GM12878 (cell line): ENCODE measurements at regions of chr1 and their contacts with region 1.

Region 1: DNA sequence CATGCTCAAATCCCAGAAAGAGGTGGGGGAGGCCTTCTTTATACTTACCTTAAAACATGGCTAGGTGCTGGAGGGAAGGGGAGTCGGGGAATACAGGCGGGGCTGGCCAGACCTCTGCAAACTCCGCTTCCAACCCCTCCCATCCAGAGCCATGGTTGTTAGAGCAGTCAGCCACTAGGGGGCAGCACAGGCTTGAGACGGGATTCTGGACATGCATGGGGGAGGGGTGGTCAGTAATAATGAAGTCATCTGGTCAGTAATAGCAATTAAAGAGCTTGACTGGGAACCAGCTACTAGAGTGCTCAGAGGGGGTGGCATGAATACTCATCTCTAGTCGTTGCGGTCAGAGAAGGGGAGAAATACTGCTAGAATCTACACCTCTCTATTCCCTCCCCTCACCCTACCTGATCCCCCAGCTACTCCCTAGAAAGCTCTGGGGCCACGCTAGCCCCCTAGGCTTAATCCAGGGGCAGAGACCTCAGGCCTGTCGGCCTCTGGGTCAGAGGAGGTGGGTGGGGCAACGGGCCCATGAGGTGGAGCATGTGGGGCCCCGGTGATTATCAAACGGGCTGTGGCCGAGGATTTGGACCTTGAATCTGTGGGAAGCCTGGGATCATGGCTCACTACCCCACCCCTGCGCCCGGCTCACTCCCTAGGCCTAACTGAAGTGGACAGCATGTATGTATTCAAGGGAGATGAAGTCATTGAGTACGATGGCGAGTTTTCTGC is 2.9 kb downstream of the CASQ1 start:
- DNase-seq: peak; percentile 48
- ATAC-seq: peak; percentile 86
- H3K4me3 ChIP-seq: no peak overlapping the region
- H3K27ac ChIP-seq: no peak overlapping the region
- H3K4me1 ChIP-seq: peaks cover 21% of the 10 kb centered on the region
- H3K27me3 ChIP-seq: peaks cover 0 to 3% of the 10 kb centered on the region in 2 experiments; a peak in 1 of 4 replicates
- CTCF ChIP-seq: peak; percentile 95 to 99 (median 97); a peak in 5 of 6 replicates
- EP300 ChIP-seq: no peak
- POLR2A ChIP-seq: no peak
- RAD21 ChIP-seq: peak; percentile 100

Region 2: DNA sequence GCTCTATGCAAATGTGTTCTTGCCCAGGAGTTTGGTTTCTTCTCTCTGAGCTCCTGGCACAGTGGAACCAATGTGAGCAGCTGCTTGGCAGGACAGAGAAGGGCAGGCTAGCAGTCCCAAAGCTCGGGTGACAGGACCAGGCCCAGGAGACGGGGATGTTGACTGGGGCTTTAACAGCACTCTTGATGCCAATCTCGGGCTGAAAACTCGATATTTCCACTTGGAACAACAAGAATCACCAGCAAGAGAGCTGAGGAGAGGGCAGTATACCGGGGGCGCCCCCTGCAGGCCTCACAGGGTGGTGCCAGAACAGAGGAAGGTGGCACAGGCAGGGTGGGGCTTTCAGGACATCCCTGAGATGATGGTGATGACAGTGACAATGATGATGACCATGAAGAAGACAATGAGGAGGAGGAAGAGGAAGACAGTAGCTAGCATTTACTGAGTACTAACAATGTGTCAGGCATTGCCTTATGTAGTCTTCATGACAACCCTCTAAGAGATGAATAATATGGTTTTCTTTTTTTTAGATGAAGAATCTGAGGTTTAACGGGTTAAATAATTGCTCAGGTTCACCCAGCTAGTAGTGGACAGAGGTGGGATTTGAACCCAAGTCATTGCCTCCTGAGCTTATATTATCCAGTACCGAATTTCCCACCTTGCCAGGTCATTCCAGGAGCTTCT is 114.6 kb before region 1 on chr1:
- CTCF ChIA-PET with region 1: interaction called, 13 read pairs
- POLR2A ChIA-PET with region 1: no interaction called
- RAD21 ChIA-PET with region 1: no interaction called
- SMC1A ChIA-PET with region 1: no interaction called
- in situ Hi-C with region 1: no loop called
- intact Hi-C with region 1: no loop called
- DNase-seq: no peak
- ATAC-seq: peak; percentile 96
- H3K4me3 ChIP-seq: no peak overlapping the region
- H3K27ac ChIP-seq: no peak overlapping the region
- H3K4me1 ChIP-seq: no peaks in the 10 kb centered on the region; the same call in 1 of the 2 replicates
- H3K27me3 ChIP-seq: peaks cover 0 to 2% of the 10 kb centered on the region in 2 experiments; a peak in 3 of 4 replicates
- CTCF ChIP-seq: peak; percentile 78 to 97 (median 92)
- EP300 ChIP-seq: no peak
- POLR2A ChIP-seq: no peak
- RAD21 ChIP-seq: peak; percentile 78

Region 3: GRCh38 chr1:160169553-160170399 is 23.5 kb before region 1 on chr1:
- CTCF ChIA-PET with region 1: interaction called, 17 read pairs
- POLR2A ChIA-PET with region 1: interaction called, 3 read pairs
- RAD21 ChIA-PET with region 1: interaction called, 12 read pairs
- SMC1A ChIA-PET with region 1: interaction called, 10 read pairs
- in situ Hi-C with region 1: no loop called
- intact Hi-C with region 1: no loop called
- DNase-seq: peak; percentile 71
- ATAC-seq: peak; percentile 86
- H3K4me3 ChIP-seq: no peak overlapping the region
- H3K27ac ChIP-seq: no peak overlapping the region
- H3K4me1 ChIP-seq: peaks cover 21% of the 10 kb centered on the region
- H3K27me3 ChIP-seq: no peaks in the 10 kb centered on the region; a peak in 2 of 4 replicates
- CTCF ChIP-seq: no peak
- EP300 ChIP-seq: peak in 1 of 2 experiments; percentile 57; a peak in 2 of 4 replicates
- POLR2A ChIP-seq: no peak
- RAD21 ChIP-seq: no peak

Region 4: GRCh38 chr1:160219062-160219929 is 26.0 kb after region 1 on chr1:
- CTCF ChIA-PET with region 1: interaction called, 82 read pairs
- POLR2A ChIA-PET with region 1: no interaction called
- RAD21 ChIA-PET with region 1: interaction called, 35 read pairs
- SMC1A ChIA-PET with region 1: interaction called, 51 read pairs
- in situ Hi-C with region 1: no loop called
- intact Hi-C with region 1: loop called (anchors 1 kb)
- DNase-seq: no peak
- ATAC-seq: peak; percentile 44
- H3K4me3 ChIP-seq: no peak overlapping the region
- H3K27ac ChIP-seq: no peak overlapping the region
- H3K4me1 ChIP-seq: no peaks in the 10 kb centered on the region
- H3K27me3 ChIP-seq: no peaks in the 10 kb centered on the region
- CTCF ChIP-seq: peak; percentile 21 to 34 (median 34); a peak in 3 of 6 replicates
- EP300 ChIP-seq: no peak
- POLR2A ChIP-seq: no peak
- RAD21 ChIP-seq: peak; percentile 43

Region 5: DNA sequence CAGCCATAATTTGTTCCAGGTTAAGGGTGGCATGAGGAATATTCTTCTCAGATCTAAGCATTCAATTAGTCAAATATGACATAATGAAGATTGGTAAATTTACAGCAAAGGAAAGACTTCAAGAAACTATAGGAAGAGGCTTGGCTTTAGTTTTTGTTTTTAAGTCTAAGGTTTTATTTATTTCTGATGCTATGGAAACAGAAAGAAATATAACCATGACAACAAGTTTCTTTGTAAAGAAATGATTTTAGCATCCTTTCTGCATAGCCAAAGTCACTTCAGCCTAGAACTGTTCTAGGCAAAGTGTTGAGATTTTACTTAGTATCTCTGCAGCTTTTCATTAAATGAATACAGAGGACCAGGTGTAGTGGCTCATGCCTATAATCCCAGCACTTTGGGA is 39.7 kb after region 1 on chr1:
- CTCF ChIA-PET with region 1: interaction called, 24 read pairs
- POLR2A ChIA-PET with region 1: no interaction called
- RAD21 ChIA-PET with region 1: interaction called, 8 read pairs
- SMC1A ChIA-PET with region 1: interaction called, 19 read pairs
- in situ Hi-C with region 1: no loop called
- intact Hi-C with region 1: no loop called
- DNase-seq: no peak
- ATAC-seq: no peak
- H3K4me3 ChIP-seq: no peak overlapping the region
- H3K27ac ChIP-seq: no peak overlapping the region
- H3K4me1 ChIP-seq: peaks cover 4% of the 10 kb centered on the region; the same call in 1 of the 2 replicates
- H3K27me3 ChIP-seq: no peaks in the 10 kb centered on the region
- CTCF ChIP-seq: no peak
- EP300 ChIP-seq: no peak
- POLR2A ChIP-seq: no peak
- RAD21 ChIP-seq: no peak

Region 6: GRCh38 chr1:160244209-160244608 is 51.0 kb after region 1 on chr1:
- CTCF ChIA-PET with region 1: interaction called, 273 read pairs
- POLR2A ChIA-PET with region 1: interaction called, 4 read pairs
- RAD21 ChIA-PET with region 1: interaction called, 12 read pairs
- SMC1A ChIA-PET with region 1: interaction called, 19 read pairs
- in situ Hi-C with region 1: no loop called
- intact Hi-C with region 1: no loop called
- DNase-seq: no peak
- ATAC-seq: no peak
- H3K4me3 ChIP-seq: no peak overlapping the region
- H3K27ac ChIP-seq: no peak overlapping the region
- H3K4me1 ChIP-seq: no peaks in the 10 kb centered on the region
- H3K27me3 ChIP-seq: no peaks in the 10 kb centered on the region
- CTCF ChIP-seq: no peak
- EP300 ChIP-seq: no peak
- POLR2A ChIP-seq: no peak
- RAD21 ChIP-seq: no peak

Region 7: GRCh38 chr1:160284782-160285344 is 91.6 kb after region 1 on chr1 and contains the start of gene PEX19:
- CTCF ChIA-PET with region 1: interaction called, 231 read pairs
- POLR2A ChIA-PET with region 1: no interaction called
- RAD21 ChIA-PET with region 1: interaction called, 105 read pairs
- SMC1A ChIA-PET with region 1: interaction called, 13 read pairs
- in situ Hi-C with region 1: loop called (anchors 5 kb)
- intact Hi-C with region 1: no loop called
- DNase-seq: peak; percentile 71
- ATAC-seq: peak; percentile 100
- H3K4me3 ChIP-seq: peak within 1 kb of the TSS; percentile 91
- H3K27ac ChIP-seq: peak within 1 kb of the TSS; percentile 68
- H3K4me1 ChIP-seq: no peaks in the 10 kb centered on the region
- H3K27me3 ChIP-seq: no peaks in the 10 kb centered on the region
- CTCF ChIP-seq: no peak
- EP300 ChIP-seq: no peak
- POLR2A ChIP-seq: peak; percentile 90
- RAD21 ChIP-seq: no peak
- polyA plus RNA-seq, gene PEX19: 29.4 to 50.8 TPM

Region 8: GRCh38 chr1:161792740-161793139 is 1599.5 kb after region 1 on chr1:
- CTCF ChIA-PET with region 1: no interaction called
- POLR2A ChIA-PET with region 1: no interaction called
- RAD21 ChIA-PET with region 1: no interaction called
- SMC1A ChIA-PET with region 1: no interaction called
- in situ Hi-C with region 1: no loop called
- intact Hi-C with region 1: no loop called
- DNase-seq: peak; percentile 23
- ATAC-seq: peak; percentile 90
- H3K4me3 ChIP-seq: no peak overlapping the region
- H3K27ac ChIP-seq: no peak overlapping the region
- H3K4me1 ChIP-seq: no peaks in the 10 kb centered on the region
- H3K27me3 ChIP-seq: no peaks in the 10 kb centered on the region
- CTCF ChIP-seq: peak; percentile 42 to 61 (median 49); a peak in 5 of 6 replicates
- EP300 ChIP-seq: no peak
- POLR2A ChIP-seq: no peak
- RAD21 ChIP-seq: peak; percentile 73